ENCODE measurements at regions of chr14 and their contacts with region 1.

Region 1: GRCh38 chr14:75888945-75889344 is 92.8 kb downstream of the TGFB3 start:
- DNase-seq: no peak
- ATAC-seq: peak in 5 of 8 donors; percentile 42 to 73 (median 56)
- H3K4me3 ChIP-seq: no peak overlapping the region
- H3K27ac ChIP-seq: peak overlapping the region in 4 of 10 donors; percentile 25 to 62 (median 46)
- H3K4me1 ChIP-seq: peaks cover 0 to 10% (median 0%) of the 10 kb centered on the region in 9 donors
- H3K27me3 ChIP-seq: no peaks in the 10 kb centered on the region
- CTCF ChIP-seq: no peak

Region 2: GRCh38 chr14:75811872-75812499 is 77.0 kb before region 1 on chr14:
- intact Hi-C with region 1: loop called in 1 of 10 experiments (anchors 2 kb)
- DNase-seq: no peak
- ATAC-seq: no peak
- H3K4me3 ChIP-seq: no peak overlapping the region
- H3K27ac ChIP-seq: no peak overlapping the region
- H3K4me1 ChIP-seq: peaks cover 0 to 3% (median 0%) of the 10 kb centered on the region in 9 donors
- H3K27me3 ChIP-seq: no peaks in the 10 kb centered on the region
- CTCF ChIP-seq: no peak

Measured in heart right ventricle (tissue), 16 donors.